ENCODE measurements at regions of chr19 and their contacts with region 1.

Region 1: DNA sequence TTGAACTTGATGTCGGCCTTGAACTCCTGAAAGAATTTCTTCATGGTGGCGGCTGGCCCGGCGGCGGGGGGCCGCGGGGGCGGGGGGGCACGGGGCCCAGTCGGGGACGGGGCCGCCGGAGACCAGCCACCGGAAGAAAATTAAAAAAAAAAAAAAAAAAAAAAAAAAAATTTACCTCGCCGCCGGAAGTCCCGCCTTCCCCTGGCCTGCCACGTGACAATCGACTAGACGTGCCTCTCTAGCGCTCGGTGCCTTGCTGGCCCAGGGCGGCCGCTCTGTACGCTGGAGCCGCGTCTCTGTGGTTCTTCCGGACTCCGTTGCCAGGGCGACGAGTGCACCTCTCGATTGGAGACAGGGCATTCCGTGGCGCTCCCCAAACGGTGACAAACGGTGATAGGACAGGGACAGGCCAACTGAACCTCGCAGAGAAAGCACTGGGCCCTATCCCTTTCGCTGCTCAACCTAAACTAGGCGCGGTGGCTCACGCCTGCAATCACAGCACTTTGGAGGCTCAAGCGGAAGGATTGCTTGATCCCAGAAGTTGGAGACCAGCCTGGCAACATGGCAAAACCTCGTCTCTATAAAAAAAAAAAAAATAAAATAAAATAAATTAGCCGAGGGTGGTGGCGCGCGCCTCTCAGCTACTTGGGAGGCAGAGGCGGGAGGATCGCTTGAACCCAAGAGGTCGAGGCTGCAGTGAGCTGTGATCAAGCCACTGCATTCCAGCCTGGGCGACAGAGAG is at the start of gene UBXN6:
- DNase-seq: peak; percentile 97
- H3K4me3 ChIP-seq: peak within 1 kb of the TSS; percentile 84
- H3K27ac ChIP-seq: peak within 1 kb of the TSS; percentile 94
- H3K27me3 ChIP-seq: no peaks in the 10 kb centered on the region
- CTCF ChIP-seq: no peak
- polyA plus RNA-seq, gene UBXN6: 45.2 and 58.3 TPM in 2 replicates

Region 2: DNA sequence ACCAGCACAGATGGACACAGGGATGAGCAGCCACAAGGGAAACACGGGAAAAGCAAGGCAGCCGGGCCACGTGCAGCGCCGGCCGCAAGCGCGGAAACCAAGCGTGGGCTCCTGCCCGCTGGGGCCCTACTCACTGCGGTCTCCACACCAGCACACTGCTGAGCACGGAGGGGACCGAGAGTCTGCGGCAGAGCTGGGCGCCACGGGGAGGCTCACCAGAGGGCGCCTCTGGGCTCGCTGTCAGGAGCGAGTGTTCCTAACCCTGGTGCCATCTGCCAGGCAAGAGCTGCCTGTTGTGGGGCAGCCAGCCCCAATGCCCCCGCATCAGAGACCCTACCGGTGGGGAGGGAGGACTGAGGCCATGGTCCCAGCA is 88.0 kb before region 1 on chr19:
- CTCF ChIA-PET with region 1: no interaction called
- POLR2A ChIA-PET with region 1: no interaction called
- DNase-seq: no peak
- H3K4me3 ChIP-seq: no peak overlapping the region
- H3K27ac ChIP-seq: no peak overlapping the region
- H3K27me3 ChIP-seq: no peaks in the 10 kb centered on the region
- CTCF ChIP-seq: peak; percentile 48

Region 3: GRCh38 chr19:4429771-4430171 is 28.1 kb before region 1 on chr19:
- CTCF ChIA-PET with region 1: no interaction called
- POLR2A ChIA-PET with region 1: interaction called, 10 read pairs
- DNase-seq: peak; percentile 23
- H3K4me3 ChIP-seq: no peak overlapping the region
- H3K27ac ChIP-seq: peak overlapping the region; percentile 52
- H3K27me3 ChIP-seq: no peaks in the 10 kb centered on the region
- CTCF ChIP-seq: no peak

Region 4: GRCh38 chr19:4444765-4445741 is 12.8 kb before region 1 on chr19:
- CTCF ChIA-PET with region 1: no interaction called
- POLR2A ChIA-PET with region 1: interaction called, 17 read pairs
- DNase-seq: no peak
- H3K4me3 ChIP-seq: no peak overlapping the region
- H3K27ac ChIP-seq: no peak overlapping the region
- H3K27me3 ChIP-seq: no peaks in the 10 kb centered on the region
- CTCF ChIP-seq: no peak

Region 5: DNA sequence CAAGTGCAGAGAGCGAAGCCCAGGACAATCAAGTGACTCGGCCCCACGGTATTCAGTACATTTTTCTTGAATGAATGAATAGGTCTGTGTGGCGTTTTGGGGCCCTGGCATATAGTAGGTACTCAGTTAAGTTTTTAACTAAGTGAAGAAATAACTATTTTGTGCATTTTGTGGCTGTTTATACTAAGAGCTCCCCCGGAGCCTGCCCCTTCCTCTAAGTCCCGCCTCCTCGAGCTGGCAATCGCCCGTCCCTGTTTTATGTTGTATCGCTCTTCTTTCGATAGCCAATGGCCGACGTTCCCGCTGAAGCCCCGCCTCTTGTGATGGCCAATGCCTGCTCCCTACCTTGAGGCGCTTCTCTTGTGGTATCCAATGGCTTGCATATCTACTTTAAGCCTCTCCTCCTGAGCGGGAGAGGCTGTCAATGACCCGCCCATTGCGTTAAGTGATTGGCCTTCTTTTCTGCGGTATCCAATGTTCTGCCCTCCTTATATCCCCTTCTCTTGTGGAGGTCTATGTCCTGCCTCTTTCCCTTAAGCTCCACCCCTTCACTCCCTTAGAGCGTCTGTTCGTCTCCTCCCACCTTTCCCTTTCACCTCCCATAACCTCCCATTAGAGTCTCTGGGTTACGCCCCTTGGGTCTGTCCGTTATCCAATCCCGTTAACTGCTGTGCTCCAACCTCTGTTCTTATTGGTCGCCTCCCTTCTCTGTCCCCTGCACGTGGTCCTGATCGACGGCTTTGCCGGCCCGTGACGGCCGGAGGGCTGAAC is 13.8 kb after region 1 on chr19:
- CTCF ChIA-PET with region 1: interaction called, 6 read pairs
- POLR2A ChIA-PET with region 1: interaction called, 23 read pairs
- DNase-seq: peak; percentile 100
- H3K4me3 ChIP-seq: peak overlapping the region; percentile 66
- H3K27ac ChIP-seq: peak overlapping the region; percentile 72
- H3K27me3 ChIP-seq: no peaks in the 10 kb centered on the region
- CTCF ChIP-seq: no peak

Region 6: DNA sequence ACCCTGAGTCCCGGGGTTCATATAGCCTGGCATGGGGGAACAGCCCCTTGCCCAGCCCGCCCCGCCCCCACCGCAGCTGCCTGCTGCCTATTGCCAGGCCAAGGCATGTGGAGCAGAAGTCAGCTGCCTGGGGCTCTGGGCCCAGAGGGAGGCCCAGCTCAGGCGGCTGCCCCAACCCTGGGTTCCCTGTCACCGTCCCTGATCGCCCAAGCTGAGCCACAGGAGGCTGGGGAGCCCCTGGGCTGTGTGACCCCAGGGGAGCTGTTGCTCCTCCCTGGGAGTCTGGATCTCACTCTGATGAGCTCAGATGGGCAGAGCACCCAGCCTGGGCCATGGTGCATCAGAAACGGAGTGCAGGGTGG is 59.1 kb after region 1 on chr19:
- CTCF ChIA-PET with region 1: no interaction called
- POLR2A ChIA-PET with region 1: no interaction called
- DNase-seq: no peak
- H3K4me3 ChIP-seq: no peak overlapping the region
- H3K27ac ChIP-seq: no peak overlapping the region
- H3K27me3 ChIP-seq: no peaks in the 10 kb centered on the region
- CTCF ChIP-seq: no peak